Natural killer cell (primary cell): ENCODE measurements at regions of chr17 and their contacts with region 1.

Region 1: GRCh38 chr17:39676198-39676819 is 8.1 kb downstream of the PNMT start:
- DNase-seq: peak; percentile 61 to 81
- ATAC-seq: peak; percentile 86 to 88 (median 88)
- H3K4me3 ChIP-seq: no peak overlapping the region
- H3K4me3 Mint-ChIP-seq: peak overlapping the region; percentile 80
- H3K27ac ChIP-seq: peak overlapping the region; percentile 62
- H3K27ac Mint-ChIP-seq: peak overlapping the region; percentile 95 to 98
- H3K4me1 ChIP-seq: peaks cover 69% of the 10 kb centered on the region
- H3K4me1 Mint-ChIP-seq: peaks cover 56 to 74% of the 10 kb centered on the region in 2 donors
- H3K27me3 ChIP-seq: no peaks in the 10 kb centered on the region
- H3K27me3 Mint-ChIP-seq: no peaks in the 10 kb centered on the region
- CTCF ChIP-seq: no peak

Region 2: DNA sequence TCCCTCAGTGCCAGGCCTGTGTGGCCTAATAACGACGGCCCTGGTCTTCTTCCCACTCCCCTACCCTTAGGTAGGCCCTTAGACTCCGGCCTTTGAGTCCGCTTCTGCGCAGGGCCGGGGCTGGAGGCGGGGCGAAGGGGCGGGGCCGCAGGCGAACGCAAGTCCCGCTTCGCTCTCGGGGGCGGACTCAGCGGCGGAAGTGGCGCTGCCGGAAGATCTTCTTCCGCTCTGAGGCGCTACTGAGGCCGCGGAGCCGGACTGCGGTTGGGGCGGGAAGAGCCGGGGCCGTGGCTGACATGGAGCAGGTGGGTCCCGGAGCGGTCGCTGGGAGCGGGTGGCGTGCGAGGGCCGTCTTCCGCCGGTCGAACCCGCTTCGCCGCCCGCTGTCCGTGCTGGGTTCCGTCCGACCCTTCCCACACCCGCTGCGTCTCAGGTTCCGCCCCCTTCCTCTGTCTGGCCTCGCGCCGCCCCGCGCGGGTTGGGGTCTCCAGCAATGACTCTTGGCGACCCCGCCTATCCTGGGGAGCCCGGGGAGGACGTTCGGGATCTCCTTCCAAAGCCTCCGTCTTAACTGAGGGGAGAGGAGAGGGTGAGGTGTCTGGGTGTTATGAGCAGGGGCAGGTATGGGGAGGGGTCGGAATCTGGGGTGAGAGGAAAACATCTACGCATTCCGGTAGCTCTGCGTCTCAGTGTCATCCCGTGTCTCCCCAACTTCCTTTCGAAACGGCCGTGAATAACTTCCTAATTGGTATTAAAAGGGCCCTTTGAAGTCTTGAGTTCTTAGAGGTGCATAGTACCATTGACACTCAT is 39.2 kb before region 1 on chr17 and contains the start of gene STARD3:
- intact Hi-C with region 1: loop called (anchors 5 kb)
- DNase-seq: peak; percentile 87 to 95
- ATAC-seq: peak; percentile 91 to 95 (median 92)
- H3K4me3 ChIP-seq: peak within 1 kb of the TSS; percentile 86
- H3K4me3 Mint-ChIP-seq: peak within 1 kb of the TSS; percentile 95
- H3K27ac ChIP-seq: peak within 1 kb of the TSS; percentile 97
- H3K27ac Mint-ChIP-seq: peak within 1 kb of the TSS; percentile 86 to 92
- H3K4me1 ChIP-seq: peaks cover 60% of the 10 kb centered on the region
- H3K4me1 Mint-ChIP-seq: peaks cover 48 to 61% of the 10 kb centered on the region in 2 donors
- H3K27me3 ChIP-seq: no peaks in the 10 kb centered on the region
- H3K27me3 Mint-ChIP-seq: no peaks in the 10 kb centered on the region
- CTCF ChIP-seq: no peak
- total RNA-seq, gene STARD3: 97.1 to 115 (median 105) TPM

Region 3: GRCh38 chr17:39665642-39666224 is 10.6 kb before region 1 on chr17:
- intact Hi-C with region 1: no loop called
- DNase-seq: peak in 1 of 2 donors; percentile 46
- ATAC-seq: peak in 1 of 3 donors; percentile 22
- H3K4me3 ChIP-seq: no peak overlapping the region
- H3K4me3 Mint-ChIP-seq: no peak overlapping the region
- H3K27ac ChIP-seq: no peak overlapping the region
- H3K27ac Mint-ChIP-seq: no peak overlapping the region
- H3K4me1 ChIP-seq: peaks cover 23% of the 10 kb centered on the region
- H3K4me1 Mint-ChIP-seq: peaks cover 7 to 23% of the 10 kb centered on the region in 2 donors
- H3K27me3 ChIP-seq: peaks cover 3% of the 10 kb centered on the region
- H3K27me3 Mint-ChIP-seq: no peaks in the 10 kb centered on the region
- CTCF ChIP-seq: no peak